ENCODE measurements at regions of chr17 and their contacts with region 1.

Region 1: DNA sequence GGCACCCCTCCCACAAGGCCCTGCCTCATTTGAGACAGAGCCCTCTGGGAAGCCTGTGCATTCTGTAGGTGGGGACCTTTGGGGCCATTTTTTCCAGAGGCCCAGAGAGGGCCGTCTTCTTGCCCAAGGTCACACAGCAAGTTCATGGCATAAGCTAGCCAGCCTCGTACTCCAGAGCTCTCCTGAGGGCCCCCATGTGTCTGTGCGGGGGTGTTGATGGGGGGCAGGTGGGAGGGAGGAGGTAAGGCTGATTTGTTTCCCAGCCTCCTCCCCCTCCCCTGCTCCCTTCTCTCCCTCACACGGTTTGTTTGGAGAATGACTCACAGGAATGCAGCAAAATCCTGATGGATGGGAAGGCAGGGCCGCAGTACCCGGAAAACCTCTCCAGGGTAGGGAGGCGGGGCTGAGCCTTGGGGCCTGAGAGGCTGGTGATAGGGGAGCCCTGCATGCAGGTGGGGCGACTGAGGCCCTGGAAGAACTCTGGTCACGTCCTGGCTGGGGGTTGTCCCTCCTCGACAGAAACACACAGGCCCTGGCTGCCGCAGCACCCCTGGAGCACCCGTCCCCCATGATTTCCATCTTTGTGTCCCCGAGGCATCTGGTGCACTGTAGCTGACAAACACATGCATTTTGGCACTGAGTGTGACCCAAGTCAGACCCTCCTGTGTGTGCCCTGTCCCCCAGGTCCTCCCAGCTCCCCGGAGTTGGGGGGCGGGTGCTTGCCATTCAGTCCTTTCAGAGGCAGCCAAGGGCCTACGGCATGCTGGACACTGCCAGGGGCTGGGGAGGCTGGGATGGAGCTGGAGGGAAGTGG is 29.7 kb downstream of the RAI1 start:
- DNase-seq: peak; percentile 96 to 98
- H3K4me3 ChIP-seq: peak overlapping the region; percentile 33; the same call in 1 of the 2 replicates
- H3K27ac ChIP-seq: peak overlapping the region; percentile 80
- H3K4me1 ChIP-seq: peaks cover 47% of the 10 kb centered on the region
- H3K27me3 ChIP-seq: no peaks in the 10 kb centered on the region
- CTCF ChIP-seq: no peak

Region 2: DNA sequence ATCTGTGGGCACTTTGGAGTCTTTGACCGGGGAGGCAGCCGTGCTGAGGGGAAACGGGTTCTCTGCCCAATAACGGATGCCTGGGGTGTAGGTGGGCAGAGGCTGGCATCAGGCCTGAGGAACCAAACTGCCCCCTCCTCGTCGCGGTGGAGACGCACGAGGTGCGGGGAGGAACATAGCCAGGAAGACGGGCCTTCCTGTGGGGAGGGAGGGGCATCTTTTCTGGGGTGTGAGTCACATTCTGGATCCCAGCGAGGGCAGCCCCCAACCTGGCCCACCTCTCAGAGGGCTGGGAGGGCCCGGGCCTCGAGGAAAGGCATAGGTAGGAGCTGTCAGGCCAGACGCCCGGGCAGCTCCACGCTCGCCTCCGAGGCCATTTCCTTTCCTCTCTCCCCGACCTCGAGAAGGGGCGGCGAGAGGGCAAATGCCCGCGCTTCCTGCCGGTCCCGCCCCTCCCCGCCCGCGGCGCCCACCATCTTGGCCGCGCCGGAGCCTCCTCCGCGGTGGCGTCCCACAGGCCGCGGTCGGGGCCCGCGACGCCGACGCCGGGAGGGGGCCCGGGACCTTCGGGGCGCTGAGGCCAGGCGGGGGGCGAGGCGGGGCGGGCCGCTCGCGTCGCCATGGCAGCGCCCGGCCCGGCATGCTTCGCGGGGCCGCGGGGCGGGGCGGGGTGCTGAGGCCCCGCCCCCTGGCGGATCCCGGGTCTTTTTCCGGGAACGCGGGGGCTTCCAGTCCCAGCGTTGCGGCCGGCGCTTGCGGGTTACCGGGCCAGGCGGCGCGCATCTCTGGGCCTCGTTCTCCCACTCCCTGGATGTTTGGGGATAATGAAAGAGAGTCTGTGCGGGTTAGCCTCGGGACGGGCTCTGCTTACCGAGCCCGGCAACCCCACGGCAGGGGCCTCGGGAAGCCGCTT is 16.5 kb before region 1 on chr17:
- CTCF ChIA-PET with region 1: interaction called, 8 read pairs
- POLR2A ChIA-PET with region 1: interaction called, 6 read pairs
- intact Hi-C with region 1: loop called (anchors 2 kb)
- DNase-seq: peak; percentile 72 to 76
- H3K4me3 ChIP-seq: peak overlapping the region; percentile 96
- H3K27ac ChIP-seq: peak overlapping the region; percentile 94
- H3K4me1 ChIP-seq: peaks cover 88% of the 10 kb centered on the region
- H3K27me3 ChIP-seq: no peaks in the 10 kb centered on the region
- CTCF ChIP-seq: no peak

Region 3: GRCh38 chr17:17729620-17730249 is 18.8 kb after region 1 on chr17:
- CTCF ChIA-PET with region 1: no interaction called
- POLR2A ChIA-PET with region 1: interaction called, 9 read pairs
- intact Hi-C with region 1: loop called (anchors 1 kb)
- DNase-seq: peak; percentile 66 to 72
- H3K4me3 ChIP-seq: peak overlapping the region; percentile 13; the same call in 1 of the 2 replicates
- H3K27ac ChIP-seq: peak overlapping the region; percentile 40; the same call in 1 of the 2 replicates
- H3K4me1 ChIP-seq: peaks cover 74% of the 10 kb centered on the region
- H3K27me3 ChIP-seq: no peaks in the 10 kb centered on the region
- CTCF ChIP-seq: peak; percentile 86

Region 4: GRCh38 chr17:17752089-17752820 is 41.3 kb after region 1 on chr17:
- CTCF ChIA-PET with region 1: no interaction called
- POLR2A ChIA-PET with region 1: no interaction called
- intact Hi-C with region 1: loop called (anchors 2 kb)
- DNase-seq: peak; percentile 87 to 99
- H3K4me3 ChIP-seq: peak overlapping the region; percentile 56; the same call in 1 of the 2 replicates
- H3K27ac ChIP-seq: peak overlapping the region; percentile 34
- H3K4me1 ChIP-seq: peaks cover 24% of the 10 kb centered on the region
- H3K27me3 ChIP-seq: no peaks in the 10 kb centered on the region
- CTCF ChIP-seq: peak; percentile 52; the same call in 1 of the 2 replicates

Region 5: DNA sequence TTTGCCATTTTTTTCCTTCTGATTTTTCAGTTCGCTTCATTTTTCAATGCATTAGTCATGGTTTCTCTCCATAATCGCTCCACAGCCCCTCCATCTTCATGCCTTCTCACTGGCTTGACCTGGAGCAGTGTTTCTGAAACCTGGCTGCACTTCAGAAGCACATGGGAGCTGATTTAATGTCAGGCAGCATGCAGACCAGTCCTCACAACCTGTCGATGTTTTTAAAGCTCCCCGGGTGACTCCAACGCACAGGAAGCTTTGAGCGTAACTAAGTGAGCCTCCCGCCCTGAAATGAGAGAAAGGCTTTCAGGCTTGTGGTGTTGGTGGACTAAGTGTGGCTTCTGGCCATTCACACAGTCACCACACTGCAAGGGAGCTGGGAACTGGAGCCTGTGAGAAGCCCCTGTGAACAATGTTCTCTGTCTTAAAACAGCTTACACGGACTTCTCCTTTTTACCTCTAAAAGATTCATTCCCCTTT is 360.0 kb after region 1 on chr17:
- CTCF ChIA-PET with region 1: no interaction called
- POLR2A ChIA-PET with region 1: interaction called, 18 read pairs
- intact Hi-C with region 1: no loop called
- DNase-seq: no peak
- H3K4me3 ChIP-seq: no peak overlapping the region
- H3K27ac ChIP-seq: no peak overlapping the region
- H3K4me1 ChIP-seq: peaks cover 11% of the 10 kb centered on the region
- H3K27me3 ChIP-seq: no peaks in the 10 kb centered on the region
- CTCF ChIP-seq: no peak